ENCODE measurements at regions of chr10 and their contacts with region 1.

Region 1: GRCh38 chr10:13717931-13718772 is 131.4 kb downstream of the PRPF18 start:
- DNase-seq: peak; percentile 73 to 74
- H3K4me3 ChIP-seq: peak overlapping the region; percentile 44
- H3K4me3 Mint-ChIP-seq: peak overlapping the region; percentile 98
- H3K27ac Mint-ChIP-seq: peak overlapping the region; percentile 90
- H3K4me1 ChIP-seq: peaks cover 48% of the 10 kb centered on the region
- H3K4me1 Mint-ChIP-seq: peaks cover 42% of the 10 kb centered on the region
- H3K27me3 ChIP-seq: no peaks in the 10 kb centered on the region
- H3K27me3 Mint-ChIP-seq: no peaks in the 10 kb centered on the region
- CTCF ChIP-seq: no peak

Region 2: DNA sequence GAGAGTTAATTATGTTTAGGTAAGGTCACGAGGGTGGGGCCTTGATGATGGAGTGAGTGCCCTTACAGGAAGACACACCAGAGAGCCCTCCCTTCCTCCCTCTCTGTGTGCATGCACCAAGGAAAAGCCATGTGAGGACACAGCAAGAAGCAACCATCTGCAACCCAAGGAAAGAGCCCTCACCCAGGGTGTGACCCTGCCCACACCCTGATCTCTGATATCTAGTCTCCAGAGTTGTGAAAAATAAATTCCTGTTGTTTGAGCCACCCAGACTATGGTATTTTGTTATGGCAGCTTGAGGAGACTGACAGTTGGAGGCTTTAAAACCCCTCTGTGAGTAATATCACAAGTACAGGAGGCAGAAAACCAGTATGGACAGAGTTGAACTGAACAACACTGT is 571.8 kb before region 1 on chr10:
- CTCF ChIA-PET with region 1: no interaction called
- POLR2A ChIA-PET with region 1: no interaction called
- intact Hi-C with region 1: no loop called
- DNase-seq: no peak
- H3K4me3 ChIP-seq: no peak overlapping the region
- H3K4me3 Mint-ChIP-seq: no peak overlapping the region
- H3K27ac Mint-ChIP-seq: no peak overlapping the region
- H3K4me1 ChIP-seq: no peaks in the 10 kb centered on the region
- H3K4me1 Mint-ChIP-seq: no peaks in the 10 kb centered on the region
- H3K27me3 ChIP-seq: no peaks in the 10 kb centered on the region
- H3K27me3 Mint-ChIP-seq: no peaks in the 10 kb centered on the region
- CTCF ChIP-seq: no peak

Region 3: GRCh38 chr10:13728921-13729535 is 10.9 kb after region 1 on chr10:
- CTCF ChIA-PET with region 1: interaction called, 3 read pairs
- POLR2A ChIA-PET with region 1: interaction called, 4 read pairs
- intact Hi-C with region 1: loop called (anchors 1 kb)
- DNase-seq: peak; percentile 87 to 94
- H3K4me3 ChIP-seq: no peak overlapping the region
- H3K4me3 Mint-ChIP-seq: peak overlapping the region; percentile 61
- H3K27ac Mint-ChIP-seq: peak overlapping the region; percentile 97
- H3K4me1 ChIP-seq: peaks cover 43% of the 10 kb centered on the region
- H3K4me1 Mint-ChIP-seq: peaks cover 57% of the 10 kb centered on the region
- H3K27me3 ChIP-seq: no peaks in the 10 kb centered on the region
- H3K27me3 Mint-ChIP-seq: no peaks in the 10 kb centered on the region
- CTCF ChIP-seq: no peak

Region 4: DNA sequence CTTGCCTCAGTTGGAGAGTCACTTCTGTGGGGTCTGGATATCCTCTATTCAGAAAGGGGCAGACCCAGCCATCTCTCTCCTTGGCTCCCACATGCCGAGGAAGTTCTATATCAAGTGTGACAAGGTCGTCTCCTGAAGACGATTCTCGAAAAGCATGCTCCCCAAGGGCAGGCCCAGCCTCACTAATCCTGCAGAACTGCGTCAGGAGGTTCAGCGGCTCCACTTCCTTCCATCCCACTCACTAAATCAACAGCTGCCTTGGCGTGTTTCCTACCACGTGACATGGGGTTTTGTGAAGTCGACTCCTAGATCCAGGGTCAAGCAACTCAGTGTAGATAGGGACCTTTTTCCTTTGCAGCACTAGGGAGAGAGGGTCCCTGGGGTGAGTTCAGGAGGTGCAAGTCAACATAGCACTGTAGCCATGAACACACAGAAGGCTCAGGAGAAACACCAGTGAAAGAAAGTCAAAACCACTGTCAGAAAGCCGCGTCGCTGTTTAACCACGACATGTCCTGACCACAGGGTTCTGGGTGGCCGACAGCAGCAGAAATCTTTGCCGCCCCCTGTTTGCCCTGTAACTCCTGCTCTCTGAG is 25.0 kb after region 1 on chr10:
- CTCF ChIA-PET with region 1: interaction called, 3 read pairs
- POLR2A ChIA-PET with region 1: interaction called, 3 read pairs
- intact Hi-C with region 1: loop called (anchors 1 kb)
- DNase-seq: no peak
- H3K4me3 ChIP-seq: no peak overlapping the region
- H3K4me3 Mint-ChIP-seq: no peak overlapping the region
- H3K27ac Mint-ChIP-seq: no peak overlapping the region
- H3K4me1 ChIP-seq: peaks cover 22% of the 10 kb centered on the region
- H3K4me1 Mint-ChIP-seq: peaks cover 15% of the 10 kb centered on the region
- H3K27me3 ChIP-seq: no peaks in the 10 kb centered on the region
- H3K27me3 Mint-ChIP-seq: no peaks in the 10 kb centered on the region
- CTCF ChIP-seq: no peak

Region 5: DNA sequence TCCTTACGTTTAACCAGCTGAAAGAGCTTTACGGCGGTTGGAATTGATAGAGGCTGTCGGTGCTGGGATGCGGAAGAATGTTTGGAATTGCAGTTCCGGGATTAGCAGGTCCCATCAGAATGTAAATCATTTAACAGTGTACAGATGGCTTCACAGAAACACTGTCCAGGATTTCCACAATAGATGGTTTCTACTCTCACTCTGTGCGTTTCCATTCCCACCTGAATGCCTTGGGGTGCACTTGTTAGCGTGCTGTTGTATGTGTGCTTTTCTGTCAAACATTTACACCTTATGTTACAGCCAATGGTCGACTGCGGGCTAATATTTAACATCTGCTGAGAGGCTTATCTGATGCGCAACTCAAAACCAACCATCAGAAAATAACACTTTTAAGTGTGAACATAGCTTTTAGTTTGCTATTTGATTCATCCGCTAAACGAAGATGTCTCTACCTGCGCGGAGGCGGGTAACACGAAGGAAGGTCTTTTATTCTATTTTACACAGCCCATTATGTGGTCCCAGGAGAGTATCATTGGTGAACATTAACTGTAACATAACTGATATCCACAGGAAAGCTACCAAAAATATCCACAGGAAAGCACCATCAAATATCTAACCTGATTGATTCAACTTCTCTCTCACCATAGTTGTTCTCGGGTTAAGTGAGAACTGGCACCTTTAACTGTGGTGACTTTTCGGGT is 47.6 kb after region 1 on chr10:
- CTCF ChIA-PET with region 1: interaction called, 5 read pairs
- POLR2A ChIA-PET with region 1: interaction called, 4 read pairs
- intact Hi-C with region 1: loop called (anchors 1 kb)
- DNase-seq: peak; percentile 91 to 95
- H3K4me3 ChIP-seq: peak overlapping the region; percentile 4; the same call in 1 of the 2 replicates
- H3K4me3 Mint-ChIP-seq: peak overlapping the region; percentile 63
- H3K27ac Mint-ChIP-seq: peak overlapping the region; percentile 78
- H3K4me1 ChIP-seq: peaks cover 55% of the 10 kb centered on the region
- H3K4me1 Mint-ChIP-seq: peaks cover 64% of the 10 kb centered on the region
- H3K27me3 ChIP-seq: no peaks in the 10 kb centered on the region
- H3K27me3 Mint-ChIP-seq: no peaks in the 10 kb centered on the region
- CTCF ChIP-seq: no peak

Measured in Caco-2 (cell line).